ENCODE measurements at regions of chr1 and their contacts with region 1.

Region 1: GRCh38 chr1:245045087-245045881 is 109.5 kb upstream of the KIF26B start:
- H3K4me3 Mint-ChIP-seq: no peak overlapping the region
- H3K27ac Mint-ChIP-seq: no peak overlapping the region
- H3K4me1 Mint-ChIP-seq: peaks cover 5% of the 10 kb centered on the region
- H3K27me3 Mint-ChIP-seq: no peaks in the 10 kb centered on the region

Region 2: GRCh38 chr1:244599937-244600350 is 445.3 kb before region 1 on chr1:
- intact Hi-C with region 1: loop called (anchors 2 kb)
- H3K4me3 Mint-ChIP-seq: no peak overlapping the region
- H3K27ac Mint-ChIP-seq: no peak overlapping the region
- H3K4me1 Mint-ChIP-seq: peaks cover 28% of the 10 kb centered on the region
- H3K27me3 Mint-ChIP-seq: peaks cover 1% of the 10 kb centered on the region

Region 3: DNA sequence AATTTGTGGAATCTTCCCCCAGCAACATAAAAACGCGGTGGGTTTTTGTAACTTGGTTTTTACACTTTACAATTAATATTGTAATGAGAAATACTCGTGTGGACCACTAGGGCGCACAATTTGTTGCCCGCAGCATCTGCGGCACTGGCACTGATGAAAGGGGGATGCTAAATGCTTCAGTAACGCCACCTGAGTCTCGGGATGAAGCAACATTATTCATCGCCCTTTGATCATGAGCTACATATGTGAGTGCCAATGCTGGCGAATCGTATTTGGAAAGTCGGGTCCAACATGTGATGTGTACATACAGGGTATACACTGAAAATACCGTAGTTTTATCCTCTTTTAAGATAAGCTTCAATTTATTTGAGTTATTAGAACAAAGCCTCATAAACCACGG is 244.0 kb before region 1 on chr1:
- intact Hi-C with region 1: loop called (anchors 1 kb)
- H3K4me3 Mint-ChIP-seq: no peak overlapping the region
- H3K27ac Mint-ChIP-seq: no peak overlapping the region
- H3K4me1 Mint-ChIP-seq: peaks cover 5% of the 10 kb centered on the region
- H3K27me3 Mint-ChIP-seq: peaks cover 15% of the 10 kb centered on the region

Region 4: GRCh38 chr1:244815600-244816099 is 229.6 kb before region 1 on chr1:
- intact Hi-C with region 1: loop called (anchors 1 kb)
- H3K4me3 Mint-ChIP-seq: peak overlapping the region; percentile 87
- H3K27ac Mint-ChIP-seq: peak overlapping the region; percentile 99
- H3K4me1 Mint-ChIP-seq: peaks cover 33% of the 10 kb centered on the region
- H3K27me3 Mint-ChIP-seq: no peaks in the 10 kb centered on the region

Region 5: GRCh38 chr1:244835276-244836134 is 209.8 kb before region 1 on chr1 and contains the start of gene COX20:
- intact Hi-C with region 1: loop called (anchors 5 kb)
- H3K4me3 Mint-ChIP-seq: peak within 1 kb of the TSS; percentile 95
- H3K27ac Mint-ChIP-seq: peak within 1 kb of the TSS; percentile 99
- H3K4me1 Mint-ChIP-seq: peaks cover 33% of the 10 kb centered on the region
- H3K27me3 Mint-ChIP-seq: no peaks in the 10 kb centered on the region

Region 6: GRCh38 chr1:244970661-244971551 is 74.4 kb before region 1 on chr1:
- intact Hi-C with region 1: loop called (anchors 5 kb)
- H3K4me3 Mint-ChIP-seq: peak overlapping the region; percentile 87
- H3K27ac Mint-ChIP-seq: peak overlapping the region; percentile 99
- H3K4me1 Mint-ChIP-seq: peaks cover 17% of the 10 kb centered on the region
- H3K27me3 Mint-ChIP-seq: no peaks in the 10 kb centered on the region

Region 7: DNA sequence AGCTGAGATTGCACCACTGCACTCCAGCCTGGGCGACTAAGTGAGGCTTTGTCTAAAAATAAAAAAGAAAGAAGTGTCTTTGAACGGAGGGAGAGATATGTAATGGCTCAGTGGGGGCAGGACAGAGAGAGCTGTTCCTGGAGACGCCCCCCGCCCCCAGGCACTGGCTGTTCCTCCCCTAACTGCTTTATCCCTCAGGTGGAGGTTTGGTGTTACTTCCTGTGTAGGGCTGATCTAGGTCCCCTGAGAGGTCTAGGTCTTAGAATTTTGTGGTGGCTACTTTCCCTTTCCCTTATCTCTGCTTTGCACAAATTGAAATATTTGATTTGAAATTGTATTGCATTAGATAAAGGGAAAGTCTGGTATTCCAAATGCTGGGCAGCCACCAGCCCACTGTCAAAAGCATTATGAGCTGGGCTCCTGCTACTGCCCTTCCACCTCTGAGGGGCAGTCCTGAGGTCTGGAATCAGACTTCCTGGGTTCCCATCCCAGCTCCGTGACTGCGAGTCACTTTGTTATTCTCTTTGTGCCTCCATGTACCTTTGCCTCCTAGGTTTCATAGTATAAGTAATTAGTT is 25.3 kb before region 1 on chr1:
- intact Hi-C with region 1: no loop called
- H3K4me3 Mint-ChIP-seq: no peak overlapping the region
- H3K27ac Mint-ChIP-seq: no peak overlapping the region
- H3K4me1 Mint-ChIP-seq: peaks cover 5% of the 10 kb centered on the region
- H3K27me3 Mint-ChIP-seq: no peaks in the 10 kb centered on the region

Region 8: DNA sequence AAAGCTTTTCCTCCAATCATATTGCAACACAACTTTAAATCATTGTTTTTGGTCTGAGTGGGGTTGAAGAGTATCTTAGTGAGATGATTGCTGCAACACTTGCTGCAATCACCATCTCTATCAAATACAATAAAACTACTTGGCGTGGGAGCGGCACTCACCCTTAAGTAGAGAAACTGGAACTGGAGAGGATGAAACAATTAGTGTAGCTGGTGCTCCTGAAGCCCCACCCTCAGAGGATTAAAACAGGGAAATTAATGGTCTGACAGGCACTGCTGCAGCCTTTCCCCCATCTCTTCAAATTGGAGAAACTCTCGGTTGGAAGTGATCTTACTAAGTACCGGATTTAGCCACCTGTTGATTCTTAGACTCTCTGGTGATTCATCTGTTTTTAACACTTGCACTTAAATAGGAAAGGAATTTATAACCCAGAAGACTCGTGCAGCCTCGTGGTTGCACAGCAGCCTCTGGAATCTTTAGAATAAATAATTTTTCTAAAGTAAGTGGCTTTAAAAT is 29.0 kb after region 1 on chr1:
- intact Hi-C with region 1: no loop called
- H3K4me3 Mint-ChIP-seq: no peak overlapping the region
- H3K27ac Mint-ChIP-seq: no peak overlapping the region
- H3K4me1 Mint-ChIP-seq: no peaks in the 10 kb centered on the region
- H3K27me3 Mint-ChIP-seq: no peaks in the 10 kb centered on the region

Region 9: DNA sequence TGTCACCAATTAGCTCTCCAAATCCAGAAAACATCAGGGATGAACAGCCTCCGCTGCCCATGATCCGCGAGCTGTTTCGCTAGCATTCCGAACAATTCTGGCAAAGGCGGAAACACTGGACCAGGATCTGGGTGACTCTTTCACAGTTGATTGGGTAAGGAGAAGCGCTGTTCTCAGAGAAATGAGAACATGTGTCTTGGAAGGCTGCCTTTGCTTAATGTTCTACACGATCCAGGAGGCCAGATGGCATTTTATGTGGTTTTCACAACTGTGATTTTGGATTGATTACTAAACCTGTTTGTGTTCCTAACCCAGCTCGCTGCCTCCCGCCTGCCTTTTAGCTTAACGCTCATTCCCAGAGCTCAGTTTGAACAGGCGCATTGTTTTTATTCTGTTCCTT is 253.5 kb after region 1 on chr1:
- intact Hi-C with region 1: no loop called
- H3K4me3 Mint-ChIP-seq: no peak overlapping the region
- H3K27ac Mint-ChIP-seq: no peak overlapping the region
- H3K4me1 Mint-ChIP-seq: no peaks in the 10 kb centered on the region
- H3K27me3 Mint-ChIP-seq: peaks cover 83% of the 10 kb centered on the region

Measured in dendritic cell treated with granulocyte-macrophage colony-stimulating factor and Interleukin-4, amounts not matched to agents 40 ng/mL and 50 ng/mL, for 4 days (primary cell).